ENCODE measurements at regions of chr17 and their contacts with region 1.

Region 1: DNA sequence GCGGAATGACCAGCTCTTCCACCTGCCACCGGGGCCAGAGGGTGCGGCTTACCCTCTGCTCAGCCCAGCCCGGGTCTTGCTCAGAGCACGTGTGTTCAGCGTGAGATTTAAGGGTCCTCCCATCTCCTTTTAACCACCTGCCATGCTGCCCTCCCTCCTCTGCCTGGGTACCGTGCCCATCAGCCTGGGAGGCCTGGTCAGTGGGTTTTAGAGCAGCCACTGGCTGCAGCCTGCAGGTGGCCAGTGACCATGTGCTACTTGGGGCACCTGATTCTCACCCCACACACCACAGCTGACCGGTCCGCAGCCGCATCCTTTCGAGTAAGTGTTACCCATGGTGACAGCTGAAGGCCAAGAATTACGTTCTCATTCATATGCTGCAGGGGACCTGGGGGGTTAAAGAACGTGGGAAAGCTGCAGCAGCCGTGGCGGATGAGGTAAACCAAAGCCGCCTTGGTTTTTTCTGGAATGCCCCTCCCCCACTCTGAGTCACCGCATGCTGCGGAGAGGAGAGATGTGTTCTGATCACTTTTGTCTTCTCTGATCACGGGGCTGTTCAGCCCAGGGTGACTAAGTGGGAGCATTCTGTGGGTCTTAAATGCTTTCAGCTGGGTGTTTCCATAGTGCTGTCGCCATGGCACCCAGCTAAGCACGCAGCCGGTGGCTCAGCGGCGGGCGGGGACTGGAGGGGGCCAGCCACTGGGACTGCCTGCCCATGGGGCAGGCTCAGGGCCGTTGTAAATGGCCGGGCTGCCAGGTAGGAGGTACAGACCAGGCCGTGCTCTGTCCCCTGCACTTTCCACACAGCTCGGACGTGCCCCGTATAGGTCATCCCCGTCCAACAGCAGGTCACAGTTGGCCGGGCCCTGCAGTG is 59.8 kb downstream of the BAIAP2 start:
- DNase-seq: peak in 1 of 2 donors; percentile 57
- ATAC-seq: peak in 6 of 8 donors; percentile 10 to 50 (median 42)
- H3K4me3 ChIP-seq: no peak overlapping the region
- H3K27ac ChIP-seq: peak overlapping the region in 1 of 10 donors; percentile 64
- H3K4me1 ChIP-seq: peaks cover 5 to 55% (median 11%) of the 10 kb centered on the region in 9 donors
- H3K27me3 ChIP-seq: no peaks in the 10 kb centered on the region
- CTCF ChIP-seq: no peak

Region 2: DNA sequence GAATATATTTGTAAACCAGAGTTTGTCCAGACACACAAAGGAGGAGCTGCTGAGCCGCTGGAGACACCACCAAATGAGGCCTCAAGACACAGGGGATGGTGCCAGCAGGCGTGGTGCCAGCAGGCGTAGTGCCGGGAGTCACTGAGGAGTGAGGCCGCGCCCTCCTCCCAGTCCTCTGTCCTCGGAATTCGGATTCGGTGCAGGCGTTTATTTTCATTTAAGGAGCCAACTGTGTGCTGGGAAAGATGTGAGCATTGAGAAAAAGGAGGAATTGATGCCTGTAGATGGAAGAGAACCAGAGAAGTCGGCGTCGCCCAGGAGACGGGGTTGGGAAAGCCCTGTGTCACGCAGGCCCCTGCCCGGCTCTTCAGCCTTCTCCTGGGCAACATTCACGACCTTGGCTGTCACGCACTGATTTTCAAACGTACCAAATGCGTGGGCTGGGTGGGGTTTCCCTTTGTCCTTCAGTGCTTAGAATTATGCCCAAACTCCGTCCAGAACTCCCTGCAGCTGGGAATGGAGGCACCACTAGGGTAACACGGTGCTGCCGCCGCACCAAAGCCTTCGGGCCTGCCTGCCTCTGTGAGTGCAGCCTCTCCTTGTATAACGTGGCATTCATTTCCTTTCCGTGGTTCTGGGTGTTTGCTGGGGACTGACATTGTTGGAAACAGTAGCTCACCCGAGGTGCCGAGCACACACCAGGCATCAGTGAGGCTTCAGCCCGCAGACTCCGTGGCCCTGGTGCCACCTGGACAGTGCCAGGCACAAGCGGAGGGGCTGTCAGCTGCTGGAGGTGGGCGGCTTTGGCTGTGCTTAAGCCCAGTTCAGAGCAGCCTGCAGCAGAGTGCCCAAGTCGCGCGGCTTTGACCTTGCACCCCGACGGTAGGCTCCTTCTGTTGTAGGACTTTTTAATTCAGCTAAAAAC is 152.1 kb before region 1 on chr17:
- intact Hi-C with region 1: no loop called
- DNase-seq: peak; percentile 91 to 93
- ATAC-seq: peak; percentile 87 to 94 (median 91)
- H3K4me3 ChIP-seq: no peak overlapping the region
- H3K27ac ChIP-seq: peak overlapping the region in 4 of 10 donors; percentile 13 to 53 (median 18)
- H3K4me1 ChIP-seq: peaks cover 5 to 31% (median 17%) of the 10 kb centered on the region in 9 donors
- H3K27me3 ChIP-seq: no peaks in the 10 kb centered on the region
- CTCF ChIP-seq: peak in 6 of 9 donors; percentile 8 to 46 (median 28)

Region 3: GRCh38 chr17:80955671-80956280 is 139.0 kb before region 1 on chr17:
- intact Hi-C with region 1: no loop called
- DNase-seq: no peak
- ATAC-seq: no peak
- H3K4me3 ChIP-seq: no peak overlapping the region
- H3K27ac ChIP-seq: no peak overlapping the region
- H3K4me1 ChIP-seq: peaks cover 14 to 25% (median 22%) of the 10 kb centered on the region in 9 donors
- H3K27me3 ChIP-seq: no peaks in the 10 kb centered on the region
- CTCF ChIP-seq: no peak

Region 4: GRCh38 chr17:81027591-81028505 is 66.9 kb before region 1 on chr17:
- intact Hi-C with region 1: loop called in 7 of 10 experiments (anchors 1 to 5 kb)
- DNase-seq: no peak
- ATAC-seq: no peak
- H3K4me3 ChIP-seq: no peak overlapping the region
- H3K27ac ChIP-seq: no peak overlapping the region
- H3K4me1 ChIP-seq: peaks cover 8 to 39% (median 28%) of the 10 kb centered on the region in 9 donors
- H3K27me3 ChIP-seq: peaks cover 0 to 35% (median 28%) of the 10 kb centered on the region in 7 donors
- CTCF ChIP-seq: no peak